CD4-positive, alpha-beta T cell (primary cell): ENCODE measurements at regions of chr2 and their contacts with region 1.

Region 1: DNA sequence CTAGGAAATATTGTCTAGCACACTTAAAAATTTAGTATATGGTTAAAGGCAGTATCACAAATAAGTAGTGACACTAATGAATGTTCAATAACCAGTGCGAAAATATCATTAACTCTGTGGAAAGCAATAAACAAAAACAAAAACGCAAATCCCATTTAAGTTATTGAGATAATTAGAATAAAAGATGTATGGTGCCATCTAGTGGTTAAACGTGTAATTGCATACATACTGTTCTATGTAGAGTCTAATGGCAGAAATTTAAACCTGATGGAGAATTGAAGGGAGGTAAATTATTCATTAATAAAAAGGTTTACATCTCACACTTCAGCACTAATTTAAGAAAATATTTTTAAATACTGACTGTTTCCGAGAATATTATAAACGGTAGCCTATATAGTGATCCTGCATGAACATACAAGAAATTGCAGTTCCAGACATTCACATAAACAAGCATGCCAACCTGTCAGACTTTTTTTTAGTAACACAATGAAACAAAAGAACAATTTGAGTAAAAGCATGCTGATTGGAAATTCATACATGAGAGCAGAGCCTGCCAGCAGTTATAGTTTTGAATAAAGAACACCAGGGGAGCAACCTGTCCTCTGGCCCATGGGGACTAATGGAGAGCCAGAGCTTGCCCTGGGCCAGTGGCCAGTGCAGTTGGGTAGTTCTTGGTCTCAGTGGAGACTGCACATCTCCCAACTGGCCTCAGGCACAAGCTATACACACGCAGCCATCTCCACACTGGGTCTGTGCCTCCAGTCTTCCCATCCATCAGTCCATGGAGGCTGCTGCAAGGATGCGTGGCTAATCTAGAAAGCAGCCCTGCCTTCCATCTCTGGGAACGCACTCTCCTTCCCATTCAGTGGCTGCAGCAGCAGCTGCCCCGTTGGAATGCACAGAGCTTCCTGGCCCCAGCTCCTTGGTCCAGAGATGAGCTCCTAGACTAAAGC is 28.0 kb downstream of the GCG start:
- DNase-seq: peak in 3 of 14 experiments; percentile 74 to 83 (median 80)
- ATAC-seq: peak; percentile 69
- H3K4me3 ChIP-seq: no peak overlapping the region
- H3K4me3 Mint-ChIP-seq: no peak overlapping the region
- H3K27ac ChIP-seq: no peak overlapping the region
- H3K27ac Mint-ChIP-seq: no peak overlapping the region
- H3K4me1 ChIP-seq: no peaks in the 10 kb centered on the region
- H3K4me1 Mint-ChIP-seq: peaks cover 20% of the 10 kb centered on the region
- H3K27me3 ChIP-seq: no peaks in the 10 kb centered on the region
- H3K27me3 Mint-ChIP-seq: no peaks in the 10 kb centered on the region
- CTCF ChIP-seq: peak; percentile 91

Region 2: GRCh38 chr2:161223139-161223732 is 900.8 kb before region 1 on chr2:
- CTCF ChIA-PET with region 1: no interaction called
- POLR2A ChIA-PET with region 1: no interaction called
- intact Hi-C with region 1: loop called (anchors 2 to 10 kb)
- DNase-seq: peak in 4 of 14 experiments; percentile 40 to 73 (median 66)
- ATAC-seq: peak; percentile 82
- H3K4me3 ChIP-seq: no peak overlapping the region
- H3K4me3 Mint-ChIP-seq: no peak overlapping the region
- H3K27ac ChIP-seq: no peak overlapping the region
- H3K27ac Mint-ChIP-seq: no peak overlapping the region
- H3K4me1 ChIP-seq: no peaks in the 10 kb centered on the region
- H3K4me1 Mint-ChIP-seq: peaks cover 4% of the 10 kb centered on the region
- H3K27me3 ChIP-seq: no peaks in the 10 kb centered on the region
- H3K27me3 Mint-ChIP-seq: no peaks in the 10 kb centered on the region
- CTCF ChIP-seq: peak; percentile 89

Region 3: DNA sequence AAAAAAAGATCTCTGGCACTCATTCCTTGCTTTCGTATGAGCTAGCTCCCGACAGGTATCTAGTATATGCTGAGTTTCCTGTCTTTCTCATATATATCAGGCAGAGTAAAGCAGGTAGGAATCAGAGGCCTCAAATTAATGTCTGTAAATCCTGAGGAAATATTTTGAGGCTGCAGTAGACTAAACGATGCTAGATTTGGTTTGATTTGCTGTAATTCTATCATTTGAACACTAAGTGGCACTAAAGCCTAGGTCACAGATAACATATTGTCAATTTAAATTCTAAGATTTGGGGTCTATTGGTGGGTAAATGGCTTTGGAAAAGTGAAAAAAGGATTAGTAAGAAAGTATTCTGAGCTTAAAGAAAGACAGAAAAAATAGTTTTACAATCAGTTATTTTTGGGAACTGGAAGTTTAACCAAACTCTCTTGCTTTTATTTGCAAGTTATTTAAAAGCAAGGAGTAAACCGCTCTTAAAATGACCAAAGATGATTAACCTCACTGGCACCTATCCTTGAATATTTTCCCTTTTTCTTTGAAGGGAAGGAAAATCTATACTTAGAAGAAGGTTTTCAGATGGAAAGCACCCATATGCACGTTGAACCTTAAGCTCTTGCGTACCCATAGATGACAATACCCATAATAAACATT is 537.4 kb before region 1 on chr2:
- CTCF ChIA-PET with region 1: interaction called, 8 read pairs
- POLR2A ChIA-PET with region 1: interaction called, 3 read pairs
- intact Hi-C with region 1: loop called (anchors 1 to 2 kb)
- DNase-seq: peak in 3 of 14 experiments; percentile 28 to 47 (median 35)
- ATAC-seq: no peak
- H3K4me3 ChIP-seq: no peak overlapping the region
- H3K4me3 Mint-ChIP-seq: no peak overlapping the region
- H3K27ac ChIP-seq: no peak overlapping the region
- H3K27ac Mint-ChIP-seq: no peak overlapping the region
- H3K4me1 ChIP-seq: no peaks in the 10 kb centered on the region
- H3K4me1 Mint-ChIP-seq: no peaks in the 10 kb centered on the region
- H3K27me3 ChIP-seq: no peaks in the 10 kb centered on the region
- H3K27me3 Mint-ChIP-seq: peaks cover 8% of the 10 kb centered on the region
- CTCF ChIP-seq: peak; percentile 71

Region 4: DNA sequence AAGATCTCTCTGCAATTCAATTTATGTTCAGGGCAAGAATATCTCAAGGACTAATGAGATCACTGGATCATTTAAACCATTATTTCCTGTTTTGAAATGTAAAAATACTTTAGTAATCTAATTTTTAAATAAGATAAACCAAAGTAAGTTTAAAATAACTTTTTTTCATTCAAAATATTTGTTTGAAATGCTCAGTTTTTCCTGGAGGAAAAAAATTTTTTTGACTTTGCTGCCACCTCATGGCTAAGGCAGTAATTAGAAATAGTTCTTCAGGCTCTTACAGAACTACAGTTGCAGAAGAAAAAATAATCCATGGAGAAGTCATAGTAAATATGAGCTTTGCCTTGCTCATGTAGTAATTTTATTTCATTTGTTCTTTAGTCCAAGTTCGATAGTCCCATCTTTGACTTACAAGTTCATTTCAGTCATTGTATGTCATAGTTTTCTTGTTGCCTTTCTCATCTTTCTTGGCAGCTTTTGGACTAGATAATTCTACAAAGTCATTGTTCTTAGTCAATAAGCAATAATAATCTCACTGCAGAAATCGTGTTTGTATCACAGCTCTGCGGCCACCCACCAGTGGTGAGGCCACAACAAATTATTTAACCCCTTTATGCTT is 177.5 kb before region 1 on chr2:
- CTCF ChIA-PET with region 1: no interaction called
- POLR2A ChIA-PET with region 1: no interaction called
- intact Hi-C with region 1: loop called in 1 of 2 experiments (anchors 5 kb)
- DNase-seq: peak in 4 of 14 experiments; percentile 12 to 48 (median 41)
- ATAC-seq: no peak
- H3K4me3 ChIP-seq: no peak overlapping the region
- H3K4me3 Mint-ChIP-seq: no peak overlapping the region
- H3K27ac ChIP-seq: no peak overlapping the region
- H3K27ac Mint-ChIP-seq: no peak overlapping the region
- H3K4me1 ChIP-seq: no peaks in the 10 kb centered on the region
- H3K4me1 Mint-ChIP-seq: no peaks in the 10 kb centered on the region
- H3K27me3 ChIP-seq: no peaks in the 10 kb centered on the region
- H3K27me3 Mint-ChIP-seq: no peaks in the 10 kb centered on the region
- CTCF ChIP-seq: peak; percentile 78

Region 5: GRCh38 chr2:161992526-161992925 is 131.6 kb before region 1 on chr2:
- CTCF ChIA-PET with region 1: no interaction called
- POLR2A ChIA-PET with region 1: interaction called, 5 read pairs
- intact Hi-C with region 1: loop called in 1 of 2 experiments (anchors 5 kb)
- DNase-seq: peak; percentile 18 to 83 (median 44)
- ATAC-seq: peak; percentile 75
- H3K4me3 ChIP-seq: peak overlapping the region; percentile 27
- H3K4me3 Mint-ChIP-seq: peak overlapping the region; percentile 88
- H3K27ac ChIP-seq: peak overlapping the region; percentile 65 to 78
- H3K27ac Mint-ChIP-seq: peak overlapping the region; percentile 94
- H3K4me1 ChIP-seq: peaks cover 34% of the 10 kb centered on the region
- H3K4me1 Mint-ChIP-seq: peaks cover 51% of the 10 kb centered on the region
- H3K27me3 ChIP-seq: no peaks in the 10 kb centered on the region
- H3K27me3 Mint-ChIP-seq: no peaks in the 10 kb centered on the region
- CTCF ChIP-seq: no peak

Region 6: GRCh38 chr2:162007447-162008040 is 116.5 kb before region 1 on chr2:
- CTCF ChIA-PET with region 1: no interaction called
- POLR2A ChIA-PET with region 1: interaction called, 7 read pairs
- intact Hi-C with region 1: loop called (anchors 1 kb)
- DNase-seq: peak in 3 of 14 experiments; percentile 55 to 61 (median 55)
- ATAC-seq: no peak
- H3K4me3 ChIP-seq: no peak overlapping the region
- H3K4me3 Mint-ChIP-seq: no peak overlapping the region
- H3K27ac ChIP-seq: no peak overlapping the region
- H3K27ac Mint-ChIP-seq: peak overlapping the region; percentile 7
- H3K4me1 ChIP-seq: peaks cover 15% of the 10 kb centered on the region
- H3K4me1 Mint-ChIP-seq: peaks cover 53% of the 10 kb centered on the region
- H3K27me3 ChIP-seq: no peaks in the 10 kb centered on the region
- H3K27me3 Mint-ChIP-seq: no peaks in the 10 kb centered on the region
- CTCF ChIP-seq: peak; percentile 89

Region 7: DNA sequence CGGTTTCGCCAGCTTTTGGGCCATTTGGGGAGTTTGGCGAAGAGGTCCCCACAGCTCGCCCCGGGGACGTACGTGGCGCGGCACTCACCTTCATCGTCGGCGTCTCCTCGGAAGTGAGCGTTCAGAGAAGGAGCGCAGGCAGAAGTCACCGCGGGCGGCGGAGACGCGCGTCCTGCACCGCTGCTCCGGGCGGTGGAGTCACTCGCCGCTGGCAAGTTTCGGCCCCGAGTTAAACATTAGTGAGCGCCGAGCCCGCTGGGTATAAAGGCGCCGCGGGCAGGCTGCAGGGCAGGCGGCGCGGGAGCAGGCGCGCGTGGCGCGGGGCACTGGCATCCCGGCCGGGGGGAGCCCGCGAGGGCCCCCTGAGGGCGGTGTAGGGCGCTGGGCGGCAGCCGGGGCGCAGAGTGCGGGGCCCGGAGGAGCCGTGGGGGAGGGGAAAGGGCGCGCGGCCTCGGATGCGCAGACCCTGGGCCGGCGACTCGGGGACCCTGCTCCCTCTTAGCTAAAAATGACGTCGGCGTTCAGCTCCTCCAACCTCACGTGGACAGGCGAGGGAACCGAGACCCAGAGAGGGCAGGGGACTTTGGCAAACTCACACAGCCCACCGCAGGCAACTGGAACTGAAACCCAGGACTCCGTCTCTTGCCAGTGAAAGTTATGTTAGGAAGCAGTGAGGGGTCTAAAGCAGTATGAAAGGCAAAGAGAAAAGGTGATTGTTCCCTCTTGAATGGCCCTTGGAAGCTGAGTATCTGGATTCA is 50.0 kb before region 1 on chr2 and contains the start of gene DPP4:
- CTCF ChIA-PET with region 1: no interaction called
- POLR2A ChIA-PET with region 1: no interaction called
- intact Hi-C with region 1: loop called (anchors 5 kb)
- DNase-seq: peak; percentile 21 to 78 (median 48)
- ATAC-seq: peak; percentile 80
- H3K4me3 ChIP-seq: peak within 1 kb of the TSS; percentile 85
- H3K4me3 Mint-ChIP-seq: peak within 1 kb of the TSS; percentile 95
- H3K27ac ChIP-seq: peak within 1 kb of the TSS; percentile 57 to 60
- H3K27ac Mint-ChIP-seq: peak within 1 kb of the TSS; percentile 85
- H3K4me1 ChIP-seq: peaks cover 23% of the 10 kb centered on the region
- H3K4me1 Mint-ChIP-seq: peaks cover 52% of the 10 kb centered on the region
- H3K27me3 ChIP-seq: no peaks in the 10 kb centered on the region
- H3K27me3 Mint-ChIP-seq: no peaks in the 10 kb centered on the region
- CTCF ChIP-seq: no peak
- total RNA-seq, gene DPP4: 15.5 to 16.7 TPM